IMR-90 (cell line): ENCODE measurements at regions of chr2 and their contacts with region 1.

Region 1: GRCh38 chr2:88038263-88039105 is 17.1 kb downstream of the KRCC1 start:
- DNase-seq: peak; percentile 97
- ATAC-seq: peak; percentile 96
- H3K4me3 ChIP-seq: no peak overlapping the region
- H3K27ac ChIP-seq: peak overlapping the region; percentile 66; the same call in 1 of the 2 replicates
- H3K4me1 ChIP-seq: peaks cover 2% of the 10 kb centered on the region; the same call in 1 of the 2 replicates
- H3K27me3 ChIP-seq: no peaks in the 10 kb centered on the region
- CTCF ChIP-seq: no peak
- POLR2A ChIP-seq: no peak
- RAD21 ChIP-seq: no peak

Region 2: GRCh38 chr2:88049622-88050021 is 11.1 kb after region 1 on chr2:
- CTCF ChIA-PET with region 1: interaction called, 11 read pairs
- POLR2A ChIA-PET with region 1: interaction called, 4 read pairs
- dilution Hi-C with region 1: no loop called
- in situ Hi-C with region 1: no loop called
- intact Hi-C with region 1: no loop called
- DNase-seq: no peak
- ATAC-seq: no peak
- H3K4me3 ChIP-seq: no peak overlapping the region
- H3K27ac ChIP-seq: no peak overlapping the region
- H3K4me1 ChIP-seq: peaks cover 6% of the 10 kb centered on the region
- H3K27me3 ChIP-seq: no peaks in the 10 kb centered on the region
- CTCF ChIP-seq: no peak
- POLR2A ChIP-seq: no peak
- RAD21 ChIP-seq: no peak

Region 3: DNA sequence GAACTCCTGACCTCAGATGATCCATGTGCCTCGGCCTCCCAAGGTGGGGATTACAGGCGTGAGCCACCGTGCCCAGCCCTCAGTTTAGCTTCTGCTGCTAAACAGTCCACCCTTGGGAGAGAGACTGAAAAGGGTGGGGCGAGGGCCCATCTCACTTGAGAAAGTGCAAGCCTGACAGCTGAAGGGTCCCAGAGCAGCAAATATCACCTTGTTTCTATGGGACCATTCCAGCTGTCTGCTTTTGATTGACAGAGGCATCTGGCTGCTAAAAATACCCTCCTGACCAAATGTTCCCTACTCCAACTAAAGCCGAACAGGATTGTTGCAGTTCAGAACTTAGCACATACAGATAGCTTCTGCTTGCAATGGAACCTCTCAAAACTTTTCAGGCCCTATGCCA is 28.7 kb after region 1 on chr2:
- CTCF ChIA-PET with region 1: no interaction called
- POLR2A ChIA-PET with region 1: no interaction called
- dilution Hi-C with region 1: no loop called
- in situ Hi-C with region 1: no loop called
- intact Hi-C with region 1: no loop called
- DNase-seq: no peak
- ATAC-seq: no peak
- H3K4me3 ChIP-seq: no peak overlapping the region
- H3K27ac ChIP-seq: no peak overlapping the region
- H3K4me1 ChIP-seq: no peaks in the 10 kb centered on the region
- H3K27me3 ChIP-seq: peaks cover 17% of the 10 kb centered on the region
- CTCF ChIP-seq: no peak
- POLR2A ChIP-seq: no peak
- RAD21 ChIP-seq: no peak

Region 4: DNA sequence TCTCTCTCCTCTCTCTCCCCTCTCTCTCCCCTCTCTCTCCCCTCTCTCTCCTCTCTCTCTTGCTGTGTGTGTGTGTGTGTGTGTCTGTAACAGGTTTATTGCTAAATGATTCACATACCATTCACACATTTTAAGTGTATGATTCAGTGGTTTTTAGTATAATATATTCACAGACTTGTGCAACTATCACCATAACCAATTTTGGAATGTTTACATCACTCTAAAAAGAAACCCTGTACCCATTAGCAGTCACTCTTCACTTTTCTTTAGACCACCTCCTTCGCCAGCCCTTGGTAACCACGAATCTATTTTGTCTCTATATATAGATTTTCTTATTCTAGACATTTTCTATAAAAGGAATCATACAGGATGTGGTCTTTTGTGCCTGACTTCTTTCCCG is 143.0 kb after region 1 on chr2:
- CTCF ChIA-PET with region 1: no interaction called
- POLR2A ChIA-PET with region 1: no interaction called
- dilution Hi-C with region 1: no loop called
- in situ Hi-C with region 1: no loop called
- intact Hi-C with region 1: no loop called
- DNase-seq: no peak
- ATAC-seq: no peak
- H3K4me3 ChIP-seq: no peak overlapping the region
- H3K27ac ChIP-seq: no peak overlapping the region
- H3K4me1 ChIP-seq: no peaks in the 10 kb centered on the region
- H3K27me3 ChIP-seq: peaks cover 1% of the 10 kb centered on the region; the same call in 1 of the 2 replicates
- CTCF ChIP-seq: no peak
- POLR2A ChIP-seq: no peak
- RAD21 ChIP-seq: no peak